H1 (cell line): ENCODE measurements at regions of chr15 and their contacts with region 1.

Region 1: DNA sequence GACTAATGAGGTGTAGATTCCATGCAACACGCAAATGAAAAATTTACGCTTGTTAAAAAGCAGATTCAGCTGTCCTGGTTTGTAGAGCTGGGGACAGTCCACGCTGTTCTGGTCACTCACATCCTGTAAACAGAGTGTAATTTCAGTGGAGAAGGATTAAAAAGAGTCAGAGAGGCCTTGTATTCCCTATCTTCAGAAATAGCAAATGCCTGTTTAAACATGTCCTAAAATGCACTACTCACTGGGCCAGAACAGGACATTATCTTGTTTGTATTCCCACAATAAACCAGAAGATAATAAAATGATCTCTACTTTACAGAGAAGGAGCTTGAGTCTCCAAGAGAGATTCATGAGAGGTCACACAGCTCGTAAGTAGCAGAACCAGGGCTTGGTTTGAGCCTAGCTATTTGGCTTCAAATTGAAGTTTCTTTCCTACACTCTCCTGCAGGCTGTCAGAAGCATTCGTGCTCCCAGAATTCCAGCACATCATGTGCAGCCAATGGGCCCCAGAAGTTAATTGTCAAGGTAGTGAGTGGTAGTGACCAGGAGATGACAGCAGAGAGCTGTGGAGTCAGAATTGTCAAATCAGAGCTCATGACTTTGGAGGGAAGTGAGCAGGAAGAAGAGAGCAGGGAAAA is 242.5 kb downstream of the ATP8B4 start:
- DNase-seq: peak; percentile 43 to 49
- H3K4me3 ChIP-seq: no peak overlapping the region
- H3K27ac ChIP-seq: no peak overlapping the region
- H3K4me1 ChIP-seq: peaks cover 0 to 5% (median 0%) of the 10 kb centered on the region in 4 experiments; a peak in 1 of 7 replicates
- H3K27me3 ChIP-seq: no peaks in the 10 kb centered on the region
- CTCF ChIP-seq: peak; percentile 52 to 94 (median 91)
- EP300 ChIP-seq: no peak
- POLR2A ChIP-seq: no peak
- RAD21 ChIP-seq: peak; percentile 98

Region 2: GRCh38 chr15:49471733-49472132 is 404.8 kb before region 1 on chr15:
- CTCF ChIA-PET with region 1: interaction called, 16 read pairs
- POLR2A ChIA-PET with region 1: no interaction called
- DNase-seq: no peak
- H3K4me3 ChIP-seq: no peak overlapping the region
- H3K27ac ChIP-seq: no peak overlapping the region
- H3K4me1 ChIP-seq: no peaks in the 10 kb centered on the region
- H3K27me3 ChIP-seq: no peaks in the 10 kb centered on the region
- CTCF ChIP-seq: no peak
- EP300 ChIP-seq: no peak
- POLR2A ChIP-seq: no peak
- RAD21 ChIP-seq: no peak

Region 3: DNA sequence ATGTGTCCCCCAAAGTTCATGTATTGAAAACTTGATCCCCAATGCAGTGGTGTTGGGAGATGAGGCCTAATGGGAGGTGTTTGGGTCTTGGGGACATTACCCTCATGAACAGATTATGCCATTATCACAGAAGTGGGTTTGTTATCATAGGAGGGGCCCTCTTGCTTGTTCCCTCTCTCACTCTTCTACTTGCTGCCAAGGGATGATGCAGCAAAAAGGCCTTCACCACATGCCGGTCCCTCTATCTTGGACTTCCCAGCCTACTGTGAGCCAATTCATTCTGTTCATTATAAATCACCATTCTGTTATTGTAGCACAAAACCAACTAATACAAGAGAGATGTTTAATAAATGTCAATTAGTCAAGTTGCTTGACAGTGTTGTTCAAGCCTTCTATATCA is 303.1 kb before region 1 on chr15:
- CTCF ChIA-PET with region 1: no interaction called
- POLR2A ChIA-PET with region 1: no interaction called
- DNase-seq: no peak
- H3K4me3 ChIP-seq: no peak overlapping the region
- H3K27ac ChIP-seq: no peak overlapping the region
- H3K4me1 ChIP-seq: no peaks in the 10 kb centered on the region
- H3K27me3 ChIP-seq: no peaks in the 10 kb centered on the region
- CTCF ChIP-seq: no peak
- EP300 ChIP-seq: no peak
- POLR2A ChIP-seq: no peak
- RAD21 ChIP-seq: no peak

Region 4: DNA sequence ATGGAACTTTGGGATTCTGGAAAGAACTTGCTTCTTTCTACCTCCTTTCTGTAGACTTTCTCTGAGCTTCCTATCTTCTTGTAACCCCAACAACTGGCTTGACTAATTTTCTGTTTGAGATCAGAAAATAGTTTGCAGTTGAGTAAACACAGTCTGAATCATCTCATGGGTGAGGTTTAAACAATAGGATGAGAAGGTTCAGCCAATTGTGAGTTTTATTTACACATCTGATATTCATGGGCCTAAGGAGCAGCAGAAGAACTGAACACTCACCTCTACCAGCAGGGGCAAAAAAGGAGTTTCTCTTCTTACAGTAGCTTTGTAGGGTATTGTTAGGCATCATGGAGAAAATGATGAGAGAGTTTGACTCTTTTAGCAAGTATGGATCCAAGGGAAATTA is 201.5 kb before region 1 on chr15:
- CTCF ChIA-PET with region 1: no interaction called
- POLR2A ChIA-PET with region 1: no interaction called
- DNase-seq: no peak
- H3K4me3 ChIP-seq: no peak overlapping the region
- H3K27ac ChIP-seq: no peak overlapping the region
- H3K4me1 ChIP-seq: no peaks in the 10 kb centered on the region; a peak in 1 of 7 replicates
- H3K27me3 ChIP-seq: no peaks in the 10 kb centered on the region
- CTCF ChIP-seq: no peak
- EP300 ChIP-seq: no peak
- POLR2A ChIP-seq: no peak
- RAD21 ChIP-seq: no peak

Region 5: GRCh38 chr15:49758856-49759255 is 117.7 kb before region 1 on chr15:
- CTCF ChIA-PET with region 1: no interaction called
- POLR2A ChIA-PET with region 1: no interaction called
- DNase-seq: no peak
- H3K4me3 ChIP-seq: no peak overlapping the region
- H3K27ac ChIP-seq: no peak overlapping the region
- H3K4me1 ChIP-seq: no peaks in the 10 kb centered on the region
- H3K27me3 ChIP-seq: no peaks in the 10 kb centered on the region
- CTCF ChIP-seq: no peak
- EP300 ChIP-seq: no peak
- POLR2A ChIP-seq: no peak
- RAD21 ChIP-seq: no peak

Region 6: DNA sequence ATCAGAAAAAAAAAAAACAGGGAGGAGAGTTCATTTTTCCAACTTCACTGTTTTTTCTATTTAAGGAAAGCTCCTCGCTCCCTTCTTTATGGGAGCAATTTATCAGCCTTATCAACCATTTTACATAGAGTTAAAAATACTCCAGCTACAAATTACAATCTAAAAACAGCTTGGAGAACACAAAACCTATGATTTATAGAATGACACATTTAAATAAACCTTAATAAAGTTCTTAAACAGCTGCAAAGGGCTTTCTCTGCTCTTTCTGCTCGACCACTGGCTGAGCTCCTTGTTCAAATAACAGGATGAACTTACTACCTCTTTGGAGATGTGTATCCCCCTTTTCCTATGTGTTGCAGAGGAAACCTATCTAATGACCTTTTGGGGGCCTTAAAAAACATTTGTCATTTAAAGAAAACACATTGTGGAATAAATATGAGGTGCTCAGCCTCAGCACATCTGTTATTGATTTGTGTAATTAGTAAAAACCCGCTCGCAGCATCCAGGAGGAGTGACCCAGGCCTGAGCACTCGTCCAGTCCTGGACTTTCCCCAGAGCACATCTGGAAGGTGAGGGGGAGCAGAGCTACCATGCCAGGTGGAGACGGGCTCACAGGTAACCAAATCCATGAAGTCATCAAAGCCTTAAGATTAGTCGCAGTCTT is 11.3 kb after region 1 on chr15:
- CTCF ChIA-PET with region 1: interaction called, 31 read pairs
- POLR2A ChIA-PET with region 1: no interaction called
- DNase-seq: no peak
- H3K4me3 ChIP-seq: no peak overlapping the region
- H3K27ac ChIP-seq: no peak overlapping the region
- H3K4me1 ChIP-seq: peaks cover 0 to 5% (median 0%) of the 10 kb centered on the region in 4 experiments; a peak in 3 of 7 replicates
- H3K27me3 ChIP-seq: no peaks in the 10 kb centered on the region
- CTCF ChIP-seq: no peak
- EP300 ChIP-seq: no peak
- POLR2A ChIP-seq: no peak
- RAD21 ChIP-seq: no peak

Region 7: GRCh38 chr15:50046867-50047266 is 170.3 kb after region 1 on chr15:
- CTCF ChIA-PET with region 1: interaction called, 92 read pairs
- POLR2A ChIA-PET with region 1: no interaction called
- DNase-seq: no peak
- H3K4me3 ChIP-seq: no peak overlapping the region
- H3K27ac ChIP-seq: no peak overlapping the region
- H3K4me1 ChIP-seq: no peaks in the 10 kb centered on the region
- H3K27me3 ChIP-seq: no peaks in the 10 kb centered on the region
- CTCF ChIP-seq: no peak
- EP300 ChIP-seq: no peak
- POLR2A ChIP-seq: no peak
- RAD21 ChIP-seq: no peak

Region 8: GRCh38 chr15:50128266-50128665 is 251.7 kb after region 1 on chr15:
- CTCF ChIA-PET with region 1: interaction called, 15 read pairs
- POLR2A ChIA-PET with region 1: no interaction called
- DNase-seq: no peak
- H3K4me3 ChIP-seq: no peak overlapping the region
- H3K27ac ChIP-seq: no peak overlapping the region
- H3K4me1 ChIP-seq: no peaks in the 10 kb centered on the region
- H3K27me3 ChIP-seq: no peaks in the 10 kb centered on the region
- CTCF ChIP-seq: peak in 2 of 3 experiments; percentile 39 to 55; a peak in 2 of 4 replicates
- EP300 ChIP-seq: no peak
- POLR2A ChIP-seq: no peak
- RAD21 ChIP-seq: peak; percentile 17 to 36; a peak in 2 of 4 replicates